ENCODE measurements at regions of chr11 and their contacts with region 1.

Region 1: GRCh38 chr11:85826116-85826855 is 15.3 kb upstream of the SYTL2 start:
- DNase-seq: no peak
- ATAC-seq: peak; percentile 70
- H3K4me3 ChIP-seq: no peak overlapping the region
- H3K27ac ChIP-seq: no peak overlapping the region
- H3K4me1 ChIP-seq: peaks cover 26 to 60% of the 10 kb centered on the region in 2 experiments
- H3K27me3 ChIP-seq: no peaks in the 10 kb centered on the region
- CTCF ChIP-seq: peak; percentile 47 to 72 (median 70); a peak in 5 of 6 replicates
- POLR2A ChIP-seq: no peak
- RAD21 ChIP-seq: peak; percentile 63

Region 2: GRCh38 chr11:85664615-85665481 is 161.4 kb before region 1 on chr11 and contains the start of gene CREBZF:
- CTCF ChIA-PET with region 1: no interaction called
- POLR2A ChIA-PET with region 1: no interaction called
- RAD21 ChIA-PET with region 1: no interaction called
- intact Hi-C with region 1: loop called (anchors 2 kb)
- DNase-seq: peak; percentile 87
- ATAC-seq: peak; percentile 92
- H3K4me3 ChIP-seq: peak within 1 kb of the TSS; percentile 82 to 91
- H3K27ac ChIP-seq: peak within 1 kb of the TSS; percentile 94
- H3K4me1 ChIP-seq: peaks cover 6 to 23% of the 10 kb centered on the region in 2 experiments; a peak in 3 of 4 replicates
- H3K27me3 ChIP-seq: no peaks in the 10 kb centered on the region
- CTCF ChIP-seq: no peak
- POLR2A ChIP-seq: no peak
- RAD21 ChIP-seq: no peak
- total RNA-seq, gene CREBZF: 40.2 TPM

Region 3: GRCh38 chr11:85694386-85694980 is 131.8 kb before region 1 on chr11:
- CTCF ChIA-PET with region 1: no interaction called
- POLR2A ChIA-PET with region 1: no interaction called
- RAD21 ChIA-PET with region 1: no interaction called
- intact Hi-C with region 1: loop called (anchors 10 kb)
- DNase-seq: peak; percentile 18
- ATAC-seq: peak; percentile 75
- H3K4me3 ChIP-seq: no peak overlapping the region
- H3K27ac ChIP-seq: no peak overlapping the region
- H3K4me1 ChIP-seq: peaks cover 0 to 4% of the 10 kb centered on the region in 2 experiments; a peak in 1 of 4 replicates
- H3K27me3 ChIP-seq: no peaks in the 10 kb centered on the region
- CTCF ChIP-seq: peak; percentile 42 to 70 (median 63); a peak in 5 of 6 replicates
- POLR2A ChIP-seq: no peak
- RAD21 ChIP-seq: peak; percentile 91